ENCODE measurements at regions of chr6 and their contacts with region 1.

Region 1: GRCh38 chr6:43496370-43497128 is 13.6 kb downstream of the LRRC73 start:
- DNase-seq: peak in 3 of 10 donors; percentile 54 to 74 (median 58)
- H3K4me3 ChIP-seq: peak overlapping the region in 6 of 59 donors; percentile 6 to 30 (median 17)
- H3K27ac ChIP-seq: peak overlapping the region in 19 of 59 donors; percentile 18 to 83 (median 56)
- H3K27me3 ChIP-seq: no peaks in the 10 kb centered on the region
- CTCF ChIP-seq: peak; percentile 45 to 86 (median 72)

Region 2: GRCh38 chr6:42901536-42901957 is 595.0 kb before region 1 on chr6:
- intact Hi-C with region 1: loop called in 1 of 2 experiments (anchors 10 kb)
- DNase-seq: peak in 8 of 10 donors; percentile 59 to 79 (median 66)
- H3K4me3 ChIP-seq: peak overlapping the region in 24 of 59 donors; percentile 1 to 41 (median 24)
- H3K27ac ChIP-seq: peak overlapping the region in 1 of 59 donors; percentile 42
- H3K27me3 ChIP-seq: no peaks in the 10 kb centered on the region
- CTCF ChIP-seq: peak; percentile 76 to 98 (median 91)

Region 3: DNA sequence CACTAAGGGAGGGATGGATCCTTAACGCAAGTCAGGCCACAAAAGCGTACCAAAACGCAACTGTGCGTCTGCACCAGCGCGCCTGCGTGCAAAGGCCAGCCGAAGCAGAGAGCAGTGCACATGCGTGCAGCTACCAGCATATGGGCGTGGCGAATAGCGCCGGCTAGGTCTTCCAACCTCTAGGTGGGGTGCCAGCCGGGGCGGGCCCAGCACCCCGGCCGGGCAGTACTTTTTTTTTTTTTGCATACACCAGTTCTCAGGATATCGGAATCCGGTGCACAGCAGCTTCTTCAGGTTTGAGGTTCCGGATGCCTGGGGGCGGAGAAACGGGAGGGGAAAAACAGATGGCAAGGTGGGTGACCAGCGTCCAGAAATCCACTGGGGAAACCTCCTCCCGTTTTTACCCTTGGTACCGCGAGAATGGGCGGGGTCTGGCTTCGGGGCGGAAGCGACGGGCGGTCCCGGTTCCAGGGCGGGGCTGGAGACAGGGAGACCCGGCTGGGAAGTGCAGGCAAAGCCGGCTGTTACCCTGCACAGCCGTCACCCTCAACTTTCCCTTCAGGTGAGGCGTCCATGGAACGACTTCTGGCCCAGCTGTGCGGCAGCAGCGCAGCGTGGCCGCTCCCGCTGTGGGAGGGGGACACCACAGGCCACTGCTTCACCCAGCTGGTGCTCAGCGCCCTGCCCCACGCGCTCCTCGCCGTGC is 69.0 kb before region 1 on chr6 and contains the start of gene ABCC10:
- intact Hi-C with region 1: loop called in 1 of 2 experiments (anchors 2 kb)
- DNase-seq: peak; percentile 85 to 95 (median 94)
- H3K4me3 ChIP-seq: peak within 1 kb of the TSS; percentile 52 to 99 (median 85)
- H3K27ac ChIP-seq: peak within 1 kb of the TSS; percentile 1 to 93 (median 85)
- H3K27me3 ChIP-seq: no peaks in the 10 kb centered on the region
- CTCF ChIP-seq: peak in 54 of 56 donors; percentile 5 to 72 (median 52)
- total RNA-seq, gene ABCC10: 16.3 to 62.8 (median 35.7) TPM

Region 4: DNA sequence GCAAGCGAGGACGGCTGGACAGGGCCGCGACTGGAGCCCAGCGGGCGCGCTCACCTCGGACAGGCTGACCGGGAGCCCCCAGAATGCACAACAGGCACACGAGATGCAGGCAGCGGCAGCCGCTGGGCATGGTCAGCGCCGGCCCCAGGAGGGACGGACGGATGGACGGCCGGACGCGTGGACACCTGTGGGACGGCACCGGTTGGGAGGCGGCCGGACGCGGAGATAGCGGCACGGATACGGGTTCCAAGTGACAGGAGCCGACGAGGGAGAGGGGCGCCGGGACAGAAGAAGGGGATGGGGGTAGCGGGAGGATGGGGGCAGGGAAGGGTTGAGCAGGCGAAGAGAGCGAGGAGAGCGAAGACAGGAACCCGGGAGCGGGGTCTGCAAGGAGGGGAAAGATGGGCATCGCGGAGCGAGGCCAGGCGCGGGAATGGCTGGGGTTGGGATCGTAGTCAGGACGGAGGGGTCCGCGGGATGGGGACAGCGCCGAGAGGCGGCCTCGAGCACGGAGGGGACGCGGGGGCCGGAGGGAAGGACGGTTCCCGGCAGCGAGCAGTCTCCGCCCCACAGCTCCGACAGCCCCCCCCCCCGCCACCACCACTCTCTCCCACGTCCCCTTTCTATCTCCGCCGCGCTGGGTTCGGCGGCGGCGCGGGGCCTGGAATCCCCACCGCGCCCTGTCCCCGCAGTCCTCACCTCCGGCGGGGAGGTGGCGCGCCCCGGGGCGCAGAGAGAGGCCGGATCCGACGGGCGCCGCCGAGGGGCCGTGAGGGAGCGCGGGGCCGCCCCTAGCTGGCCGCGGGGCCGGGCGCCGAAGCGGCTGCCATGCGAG is 41.6 kb before region 1 on chr6:
- intact Hi-C with region 1: loop called (anchors 1 to 2 kb)
- DNase-seq: peak; percentile 48 to 94 (median 86)
- H3K4me3 ChIP-seq: peak overlapping the region; percentile 38 to 80 (median 63)
- H3K27ac ChIP-seq: peak overlapping the region in 47 of 59 donors; percentile 2 to 87 (median 63)
- H3K27me3 ChIP-seq: peaks cover 0 to 6% (median 0%) of the 10 kb centered on the region in 45 donors
- CTCF ChIP-seq: peak in 21 of 56 donors; percentile 2 to 51 (median 14)

Region 5: DNA sequence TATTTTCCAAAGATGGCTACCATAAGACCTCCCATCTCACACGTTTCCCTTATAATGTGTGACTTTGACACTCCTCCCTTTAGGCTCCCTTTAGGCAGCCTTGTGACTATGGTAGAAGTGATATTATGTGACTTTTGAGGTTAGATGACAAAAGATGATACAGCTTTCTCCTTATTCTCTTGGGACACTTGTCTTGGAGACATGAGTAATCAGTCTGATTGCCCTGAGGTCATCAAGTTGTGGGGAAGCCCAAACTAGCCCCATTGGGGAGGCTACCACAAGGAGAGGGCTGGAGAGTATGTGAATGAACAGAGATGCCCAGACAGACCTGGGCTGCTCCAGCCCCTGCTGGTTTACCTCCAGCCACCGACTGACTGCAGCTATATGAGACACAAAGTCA is 30.6 kb before region 1 on chr6:
- intact Hi-C with region 1: no loop called
- DNase-seq: no peak
- H3K4me3 ChIP-seq: no peak overlapping the region
- H3K27ac ChIP-seq: no peak overlapping the region
- H3K27me3 ChIP-seq: peaks cover 0 to 10% (median 0%) of the 10 kb centered on the region in 45 donors
- CTCF ChIP-seq: no peak